PC-3 (cell line): ENCODE measurements at regions of chr19 and their contacts with region 1.

Region 1: DNA sequence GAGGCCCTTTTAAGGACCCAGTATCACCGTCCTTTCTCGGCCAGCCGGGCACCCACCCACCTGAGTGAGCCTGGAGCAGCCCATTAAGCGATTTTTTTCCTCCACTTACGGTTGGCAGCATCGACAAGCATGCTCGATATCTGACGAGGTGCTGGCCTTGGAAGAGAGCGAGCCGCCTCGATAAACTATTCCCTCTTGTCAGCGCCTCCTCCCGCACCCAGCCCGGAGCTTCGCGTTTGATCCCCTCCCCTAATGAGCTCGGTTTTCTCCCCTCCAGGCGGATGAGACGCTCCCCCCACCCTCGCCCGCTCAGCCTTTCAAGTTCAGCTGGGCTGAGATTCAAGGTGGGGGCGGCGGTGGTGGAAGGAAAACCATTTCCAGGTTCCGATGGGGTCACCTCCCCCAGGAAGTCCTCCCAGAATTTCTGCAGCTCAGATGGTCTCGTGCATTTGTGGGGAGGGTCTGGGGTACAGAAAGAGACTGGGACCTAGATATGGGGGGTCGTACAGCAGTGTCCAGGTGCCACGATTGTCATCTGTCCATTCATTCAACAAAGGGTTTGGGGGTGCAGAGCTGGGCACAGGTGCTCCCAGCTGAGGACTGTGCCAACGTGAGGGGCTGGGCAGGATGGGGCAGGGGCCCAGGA is 18.9 kb upstream of the ONECUT3 start:
- DNase-seq: no peak
- ATAC-seq: no peak
- H3K4me3 ChIP-seq: no peak overlapping the region
- H3K27ac ChIP-seq: no peak overlapping the region
- H3K4me1 ChIP-seq: peaks cover 6% of the 10 kb centered on the region; the same call in 1 of the 2 replicates
- H3K27me3 ChIP-seq: no peaks in the 10 kb centered on the region
- CTCF ChIP-seq: no peak

Region 2: GRCh38 chr19:1680976-1681375 is 53.5 kb before region 1 on chr19:
- CTCF ChIA-PET with region 1: no interaction called
- POLR2A ChIA-PET with region 1: no interaction called
- intact Hi-C with region 1: no loop called
- DNase-seq: no peak
- ATAC-seq: no peak
- H3K4me3 ChIP-seq: no peak overlapping the region
- H3K27ac ChIP-seq: no peak overlapping the region
- H3K4me1 ChIP-seq: no peaks in the 10 kb centered on the region
- H3K27me3 ChIP-seq: peaks cover 10% of the 10 kb centered on the region
- CTCF ChIP-seq: no peak

Region 3: DNA sequence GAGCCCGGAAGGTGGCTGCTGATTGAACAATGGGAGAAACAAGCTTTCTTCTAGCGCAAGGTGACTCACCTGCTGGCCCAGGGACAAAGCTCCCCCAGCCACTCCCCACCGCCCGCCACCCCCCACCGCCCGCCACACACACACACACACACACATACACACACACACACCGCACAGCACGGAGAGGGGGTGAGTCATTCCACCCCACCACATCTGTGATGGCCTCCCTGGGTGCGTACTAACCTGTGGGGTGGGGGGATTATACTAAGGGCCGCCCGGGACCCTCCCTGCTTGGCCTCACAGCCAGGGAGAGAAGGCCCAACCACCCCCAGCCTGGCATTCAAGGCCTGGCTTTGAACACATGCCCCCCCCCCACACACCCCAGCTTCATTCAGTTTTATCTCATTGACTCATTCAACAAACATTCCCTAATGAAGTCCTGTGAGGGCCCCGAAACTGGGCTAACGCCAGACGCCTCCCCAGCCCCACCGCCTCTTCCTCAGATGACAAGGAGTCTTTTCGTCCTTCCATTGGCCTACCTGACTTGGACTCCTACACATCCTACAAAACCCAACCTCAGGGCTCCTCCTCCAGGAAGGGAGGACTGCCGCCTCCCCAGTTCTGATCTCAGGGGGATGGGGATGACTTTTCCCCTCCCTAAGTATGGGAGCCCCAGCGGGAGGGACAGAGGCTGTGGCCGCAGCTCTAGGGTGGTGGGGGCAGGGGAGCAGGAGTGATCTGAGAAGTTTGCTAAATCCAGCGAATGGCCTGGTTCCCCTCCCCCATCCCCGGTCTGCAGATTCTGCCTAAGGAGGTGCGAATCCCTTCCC is 13.1 kb after region 1 on chr19:
- CTCF ChIA-PET with region 1: no interaction called
- POLR2A ChIA-PET with region 1: no interaction called
- intact Hi-C with region 1: loop called (anchors 1 kb)
- DNase-seq: peak; percentile 97
- ATAC-seq: peak; percentile 60
- H3K4me3 ChIP-seq: peak overlapping the region; percentile 70
- H3K27ac ChIP-seq: peak overlapping the region; percentile 99
- H3K4me1 ChIP-seq: peaks cover 42% of the 10 kb centered on the region
- H3K27me3 ChIP-seq: 0 out of 2 replicates have a peak, but pooled peaks cover 4% of the 10 kb centered on the region
- CTCF ChIP-seq: no peak